Activated naive CD8-positive, alpha-beta T cell treated with anti-CD3 and anti-CD28 coated beads, Interleukin-2, amount 10 ng/mL, durations not matched to agents 7 days and 5 days (primary cell): ENCODE measurements at regions of chr6 and their contacts with region 1.

Region 1: DNA sequence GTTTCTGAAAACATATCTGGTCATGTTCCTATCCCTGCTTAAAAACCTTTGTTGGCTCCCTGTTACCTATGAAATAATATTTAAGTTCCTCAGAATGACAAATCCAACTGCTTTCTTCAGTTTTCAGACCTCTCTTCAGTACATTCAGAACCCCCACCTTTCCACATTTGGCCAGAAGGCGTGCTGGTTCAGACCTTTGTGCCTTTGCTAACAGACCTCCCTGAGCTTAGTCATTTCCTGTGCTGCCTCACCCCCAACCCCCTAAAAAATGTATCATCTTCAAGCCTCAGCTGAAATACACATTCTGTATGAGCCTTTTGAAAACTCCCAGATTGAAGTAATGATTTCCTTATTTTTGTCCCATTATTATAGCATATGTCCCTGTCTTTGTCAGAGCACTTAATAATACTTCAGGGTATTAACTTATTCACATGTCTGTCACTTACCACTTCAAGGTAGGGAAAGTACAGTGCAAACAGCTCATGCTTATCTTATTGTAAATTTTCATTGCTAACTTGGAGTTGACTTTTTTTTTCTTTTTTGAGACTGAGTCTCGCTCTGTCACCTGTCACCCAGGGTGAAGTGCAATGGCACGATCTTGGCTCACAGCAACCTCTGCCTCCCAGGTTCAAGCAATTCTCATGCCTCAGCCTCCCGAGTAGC is 19.7 kb downstream of the FAM217A start:
- DNase-seq: peak; percentile 44
- ATAC-seq: peak; percentile 91
- H3K4me3 Mint-ChIP-seq: peak overlapping the region; percentile 79
- H3K27ac Mint-ChIP-seq: peak overlapping the region; percentile 97
- H3K4me1 Mint-ChIP-seq: peaks cover 28% of the 10 kb centered on the region
- H3K27me3 Mint-ChIP-seq: no peaks in the 10 kb centered on the region

Region 2: GRCh38 chr6:3956054-3956453 is 103.2 kb before region 1 on chr6:
- POLR2A ChIA-PET with region 1: no interaction called
- DNase-seq: no peak
- ATAC-seq: no peak
- H3K4me3 Mint-ChIP-seq: no peak overlapping the region
- H3K27ac Mint-ChIP-seq: no peak overlapping the region
- H3K4me1 Mint-ChIP-seq: peaks cover 4% of the 10 kb centered on the region
- H3K27me3 Mint-ChIP-seq: peaks cover 22% of the 10 kb centered on the region

Region 3: DNA sequence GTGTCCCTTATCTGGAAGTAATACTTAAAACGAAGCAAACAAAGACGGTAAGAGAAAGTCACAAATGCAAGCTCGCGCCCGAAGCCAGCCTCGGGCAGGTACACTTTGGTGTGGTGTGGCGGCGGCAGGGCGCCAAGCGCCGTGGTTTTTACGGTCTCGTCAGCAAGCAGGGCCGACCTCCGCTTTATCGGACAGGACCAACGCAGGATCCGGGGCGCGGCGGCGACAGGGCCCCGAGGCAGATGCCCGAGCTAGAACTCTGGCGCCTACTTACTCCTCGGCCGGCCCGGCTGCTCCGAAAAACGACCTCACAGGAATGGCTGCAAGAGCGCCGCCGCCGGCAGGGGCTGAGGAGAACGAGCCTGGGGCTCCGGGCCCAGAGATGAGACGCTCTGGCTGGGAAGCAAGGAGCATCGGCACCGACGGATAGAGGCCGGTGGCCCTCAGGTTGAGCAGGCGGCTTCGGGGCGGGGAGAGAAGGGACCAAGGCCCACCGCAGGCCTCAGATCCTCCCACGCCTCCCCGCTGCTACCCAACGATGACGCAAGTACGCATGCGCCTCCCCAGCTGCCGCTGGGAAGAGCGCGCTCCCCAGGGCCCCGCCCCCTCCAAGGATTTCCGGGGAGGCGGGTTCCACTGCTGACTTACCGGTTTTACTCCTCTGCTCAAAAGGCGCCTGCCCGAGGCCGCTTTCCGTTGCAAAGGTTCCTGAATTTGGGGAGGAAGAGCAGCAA is 40.9 kb before region 1 on chr6:
- POLR2A ChIA-PET with region 1: interaction called, 22 read pairs
- DNase-seq: peak; percentile 95
- ATAC-seq: peak; percentile 69
- H3K4me3 Mint-ChIP-seq: peak overlapping the region; percentile 97
- H3K27ac Mint-ChIP-seq: peak overlapping the region; percentile 99
- H3K4me1 Mint-ChIP-seq: peaks cover 46% of the 10 kb centered on the region
- H3K27me3 Mint-ChIP-seq: no peaks in the 10 kb centered on the region

Region 4: DNA sequence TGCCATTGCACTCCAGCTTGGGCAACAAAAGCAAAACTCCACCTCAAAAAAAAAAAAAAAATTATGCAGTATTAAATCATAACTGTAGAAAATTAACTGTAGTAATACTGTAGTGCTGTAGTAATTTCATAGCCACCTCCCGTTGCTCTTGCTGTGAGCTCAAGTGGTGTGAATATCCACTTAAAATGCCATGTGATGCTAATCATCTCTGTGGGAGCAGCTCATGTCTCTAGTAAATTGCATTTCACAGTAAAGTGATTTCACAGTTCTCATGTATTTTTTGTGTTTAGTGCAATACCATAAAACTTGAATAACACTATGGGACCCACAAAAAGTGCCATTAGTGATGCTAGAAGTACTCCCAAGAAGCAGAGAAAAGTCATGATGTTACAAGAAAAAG is 34.0 kb after region 1 on chr6:
- POLR2A ChIA-PET with region 1: no interaction called
- DNase-seq: no peak
- ATAC-seq: no peak
- H3K4me3 Mint-ChIP-seq: no peak overlapping the region
- H3K27ac Mint-ChIP-seq: no peak overlapping the region
- H3K4me1 Mint-ChIP-seq: no peaks in the 10 kb centered on the region
- H3K27me3 Mint-ChIP-seq: no peaks in the 10 kb centered on the region

Region 5: DNA sequence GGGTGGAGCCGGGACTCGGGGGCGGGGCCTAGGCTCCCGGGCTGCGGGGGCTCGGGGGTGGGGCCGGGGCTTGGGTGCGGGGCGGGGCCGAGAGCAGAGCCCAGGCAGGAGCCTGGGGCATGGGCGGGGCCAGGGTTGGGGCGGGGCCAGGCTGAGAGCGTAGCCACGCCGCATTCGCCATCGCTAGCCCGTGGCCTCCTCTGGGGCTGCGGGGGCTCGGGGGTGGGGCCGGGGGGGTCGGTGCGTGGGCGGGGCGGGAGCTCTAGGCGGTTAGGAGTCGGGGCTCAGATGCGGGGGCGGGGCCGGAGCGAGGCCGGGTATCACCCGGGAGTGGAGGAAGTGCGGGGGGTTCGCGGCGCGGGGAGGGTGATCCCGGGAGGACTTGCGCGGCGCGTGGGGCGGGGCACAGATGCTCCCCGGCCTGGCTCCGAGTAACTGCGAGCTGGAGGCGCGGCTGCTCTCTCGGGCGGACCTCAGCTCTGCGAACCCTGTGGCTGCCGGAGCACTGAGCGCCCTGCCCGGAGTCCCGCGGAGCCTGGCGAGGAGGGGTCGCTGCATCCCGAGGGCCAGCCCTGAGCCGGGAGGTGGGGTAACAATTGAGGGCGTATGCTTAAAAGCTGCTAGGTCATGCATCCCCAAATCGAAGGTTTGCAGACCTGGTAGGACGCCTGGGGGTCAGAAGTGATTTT is 76.6 kb after region 1 on chr6:
- POLR2A ChIA-PET with region 1: interaction called, 19 read pairs
- DNase-seq: peak; percentile 92
- ATAC-seq: peak; percentile 89
- H3K4me3 Mint-ChIP-seq: peak overlapping the region; percentile 82
- H3K27ac Mint-ChIP-seq: peak overlapping the region; percentile 76
- H3K4me1 Mint-ChIP-seq: peaks cover 17% of the 10 kb centered on the region
- H3K27me3 Mint-ChIP-seq: no peaks in the 10 kb centered on the region

Region 6: DNA sequence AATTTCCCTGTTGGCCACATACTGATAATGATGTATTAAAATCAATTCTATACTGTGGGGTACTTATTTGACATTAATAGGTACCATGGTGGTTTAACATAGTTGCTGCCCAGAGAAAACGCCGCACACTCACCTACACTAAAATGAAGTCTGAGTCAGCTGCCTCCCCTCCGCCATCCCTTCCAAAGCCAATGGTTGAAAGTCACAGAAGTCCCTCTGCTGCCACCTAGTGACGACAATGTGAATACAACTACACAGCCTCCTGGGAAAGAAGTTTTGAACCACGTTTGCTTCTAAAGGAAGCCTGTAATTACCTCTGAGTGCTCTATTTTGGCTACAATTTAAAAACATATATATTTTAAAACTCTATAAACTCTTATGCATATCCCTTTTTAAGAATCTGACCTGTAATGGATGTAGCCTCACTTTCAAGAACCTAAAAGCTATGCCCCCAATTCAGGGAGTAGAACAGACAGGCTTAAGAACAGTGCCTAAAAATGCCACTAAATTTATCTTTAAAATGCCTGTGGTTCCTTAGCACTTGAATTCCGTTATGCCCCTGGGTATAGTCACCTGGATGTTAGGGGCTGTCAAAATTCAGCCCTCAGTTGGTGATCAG is 96.7 kb after region 1 on chr6:
- POLR2A ChIA-PET with region 1: interaction called, 11 read pairs
- DNase-seq: peak; percentile 45
- ATAC-seq: peak; percentile 83
- H3K4me3 Mint-ChIP-seq: no peak overlapping the region
- H3K27ac Mint-ChIP-seq: no peak overlapping the region
- H3K4me1 Mint-ChIP-seq: peaks cover 6% of the 10 kb centered on the region
- H3K27me3 Mint-ChIP-seq: peaks cover 11% of the 10 kb centered on the region